Activated CD8-positive, alpha-beta T cell treated with anti-CD3 and anti-CD28 coated beads, Interleukin-2, amount 10 ng/mL, durations not matched to agents 7 days and 5 days (primary cell): ENCODE measurements at regions of chr19 and their contacts with region 1.

Region 1: GRCh38 chr19:44662691-44663385 is 8.4 kb upstream of the CEACAM19 start:
- DNase-seq: no peak
- ATAC-seq: no peak
- H3K4me3 Mint-ChIP-seq: no peak overlapping the region
- H3K27ac Mint-ChIP-seq: no peak overlapping the region
- H3K4me1 Mint-ChIP-seq: no peaks in the 10 kb centered on the region
- H3K27me3 Mint-ChIP-seq: no peaks in the 10 kb centered on the region

Region 2: DNA sequence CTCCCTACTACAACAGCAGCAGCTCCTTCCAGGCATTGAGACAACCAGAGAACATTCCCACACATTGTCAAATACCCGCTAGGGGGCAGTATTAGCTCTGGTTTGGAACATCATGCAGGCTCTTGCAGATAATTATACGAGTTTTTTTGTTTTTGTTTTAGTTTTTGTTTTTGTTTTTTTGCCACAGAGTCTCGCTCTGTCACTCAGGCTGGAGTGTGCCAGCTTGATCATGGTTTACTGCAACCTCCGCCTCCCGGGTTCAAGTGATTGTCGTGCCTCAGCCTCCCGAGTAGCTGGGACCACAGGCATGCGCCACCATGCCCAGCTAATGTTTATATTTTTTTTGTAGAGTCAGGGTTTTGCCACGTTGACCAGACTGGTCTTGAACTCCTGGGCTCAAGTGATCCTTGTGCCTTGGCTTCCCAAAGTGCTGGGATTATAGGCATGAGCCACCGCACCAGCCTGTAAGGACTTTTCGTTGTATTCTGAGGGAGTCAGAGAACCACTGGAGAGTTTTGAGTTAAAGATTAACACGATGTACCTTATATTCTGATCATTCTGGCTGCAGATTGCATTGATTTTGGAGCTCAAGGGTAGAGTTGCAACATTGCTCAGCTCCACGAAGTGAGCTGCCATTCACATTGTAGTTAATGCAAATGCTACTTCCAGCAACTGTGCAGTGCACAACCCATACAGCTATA is 91.7 kb before region 1 on chr19:
- CTCF ChIA-PET with region 1: interaction called, 40 read pairs
- POLR2A ChIA-PET with region 1: interaction called, 3 read pairs
- DNase-seq: peak; percentile 75
- ATAC-seq: peak; percentile 76
- H3K4me3 Mint-ChIP-seq: no peak overlapping the region
- H3K27ac Mint-ChIP-seq: no peak overlapping the region
- H3K4me1 Mint-ChIP-seq: no peaks in the 10 kb centered on the region
- H3K27me3 Mint-ChIP-seq: peaks cover 9% of the 10 kb centered on the region

Region 3: GRCh38 chr19:44635581-44636438 is 27.0 kb before region 1 on chr19:
- CTCF ChIA-PET with region 1: no interaction called
- POLR2A ChIA-PET with region 1: no interaction called
- DNase-seq: no peak
- ATAC-seq: no peak
- H3K4me3 Mint-ChIP-seq: no peak overlapping the region
- H3K27ac Mint-ChIP-seq: no peak overlapping the region
- H3K4me1 Mint-ChIP-seq: no peaks in the 10 kb centered on the region
- H3K27me3 Mint-ChIP-seq: peaks cover 7% of the 10 kb centered on the region

Region 4: GRCh38 chr19:44746946-44747738 is 84.3 kb after region 1 on chr19:
- CTCF ChIA-PET with region 1: no interaction called
- POLR2A ChIA-PET with region 1: no interaction called
- DNase-seq: peak; percentile 87
- ATAC-seq: peak; percentile 66
- H3K4me3 Mint-ChIP-seq: peak overlapping the region; percentile 84
- H3K27ac Mint-ChIP-seq: peak overlapping the region; percentile 91
- H3K4me1 Mint-ChIP-seq: peaks cover 59% of the 10 kb centered on the region
- H3K27me3 Mint-ChIP-seq: peaks cover 5% of the 10 kb centered on the region